Naive thymus-derived CD4-positive, alpha-beta T cell (primary cell): ENCODE measurements at regions of chr9 and their contacts with region 1.

Region 1: DNA sequence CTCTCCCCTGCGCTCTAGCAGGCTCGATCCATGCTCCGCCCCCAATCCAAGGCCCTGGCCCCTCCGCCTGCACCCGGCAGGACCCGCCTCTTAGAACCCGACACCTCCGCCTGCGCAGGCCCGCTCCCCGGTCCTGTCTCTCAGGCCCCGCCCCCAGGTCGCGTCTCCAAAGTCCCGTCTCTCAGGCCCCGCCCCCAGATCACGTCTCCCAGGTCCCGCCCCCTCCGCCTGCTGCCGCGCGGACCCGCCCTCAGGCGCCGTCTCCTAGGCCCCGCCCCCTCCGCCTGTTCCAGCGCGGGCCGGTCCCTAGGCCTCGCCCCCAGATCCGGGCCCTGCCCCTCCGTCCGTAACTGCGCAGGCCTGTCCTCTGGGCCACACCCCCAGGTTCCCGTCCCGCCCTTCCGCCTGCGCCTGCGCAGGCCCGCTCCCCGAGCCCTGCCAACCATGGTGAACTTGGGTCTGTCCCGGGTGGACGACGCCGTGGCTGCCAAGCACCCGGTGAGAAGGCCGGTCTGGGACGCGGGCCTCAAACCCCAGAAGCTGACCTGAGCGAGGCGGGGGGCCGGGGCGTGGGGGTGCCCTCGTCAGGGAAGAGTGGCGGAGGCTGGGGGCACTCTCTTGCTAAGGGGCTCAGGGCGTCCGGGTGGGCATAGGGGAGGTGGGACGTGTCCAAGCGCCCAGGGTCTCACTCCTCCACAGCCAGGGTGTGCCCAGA is at the start of gene TMEM141:
- DNase-seq: peak; percentile 99 to 100 (median 99)
- ATAC-seq: peak; percentile 92
- H3K4me3 ChIP-seq: peak within 1 kb of the TSS; percentile 94
- H3K4me3 Mint-ChIP-seq: peak within 1 kb of the TSS; percentile 76 to 90 (median 86)
- H3K27ac ChIP-seq: peak within 1 kb of the TSS; percentile 91
- H3K27ac Mint-ChIP-seq: peak within 1 kb of the TSS; percentile 57 to 98 (median 92)
- H3K4me1 ChIP-seq: peaks cover 18 to 22% of the 10 kb centered on the region in 2 donors
- H3K4me1 Mint-ChIP-seq: peaks cover 10 to 40% (median 31%) of the 10 kb centered on the region in 7 donors
- H3K27me3 ChIP-seq: no peaks in the 10 kb centered on the region
- H3K27me3 Mint-ChIP-seq: peaks cover 0 to 16% (median 0%) of the 10 kb centered on the region in 5 donors
- total RNA-seq, gene TMEM141: 27.2 to 54.9 (median 36.2) TPM

Region 2: GRCh38 chr9:136363606-136364370 is 427.3 kb before region 1 on chr9 and contains the start of gene DNLZ:
- CTCF ChIA-PET with region 1: no interaction called
- POLR2A ChIA-PET with region 1: no interaction called
- intact Hi-C with region 1: loop called (anchors 1 to 2 kb)
- DNase-seq: peak; percentile 71 to 93 (median 90)
- ATAC-seq: peak; percentile 88
- H3K4me3 ChIP-seq: peak within 1 kb of the TSS; percentile 70
- H3K4me3 Mint-ChIP-seq: peak within 1 kb of the TSS; percentile 65 to 88 (median 84)
- H3K27ac ChIP-seq: peak within 1 kb of the TSS; percentile 75
- H3K27ac Mint-ChIP-seq: peak within 1 kb of the TSS; percentile 62 to 91 (median 75)
- H3K4me1 ChIP-seq: peaks cover 0 to 5% of the 10 kb centered on the region in 2 donors
- H3K4me1 Mint-ChIP-seq: peaks cover 0 to 6% (median 0%) of the 10 kb centered on the region in 7 donors
- H3K27me3 ChIP-seq: no peaks in the 10 kb centered on the region
- H3K27me3 Mint-ChIP-seq: no peaks in the 10 kb centered on the region
- total RNA-seq, gene DNLZ: 17.2 to 27.5 (median 24.8) TPM

Region 3: GRCh38 chr9:136711751-136712689 is 79.1 kb before region 1 on chr9 and contains the start of gene DIPK1B:
- CTCF ChIA-PET with region 1: no interaction called
- POLR2A ChIA-PET with region 1: no interaction called
- intact Hi-C with region 1: no loop called
- DNase-seq: peak in 1 of 9 donors; percentile 16
- ATAC-seq: peak; percentile 52
- H3K4me3 ChIP-seq: peak within 1 kb of the TSS; percentile 24
- H3K4me3 Mint-ChIP-seq: peak within 1 kb of the TSS in 9 of 10 donors; percentile 33 to 84 (median 69)
- H3K27ac ChIP-seq: no peak within 1 kb of the TSS
- H3K27ac Mint-ChIP-seq: no peak within 1 kb of the TSS
- H3K4me1 ChIP-seq: no peaks in the 10 kb centered on the region
- H3K4me1 Mint-ChIP-seq: peaks cover 0 to 6% (median 4%) of the 10 kb centered on the region in 7 donors
- H3K27me3 ChIP-seq: peaks cover 0 to 9% of the 10 kb centered on the region in 2 donors
- H3K27me3 Mint-ChIP-seq: peaks cover 22 to 47% (median 35%) of the 10 kb centered on the region in 5 donors
- total RNA-seq, gene DIPK1B: 0.46 to 1.6 (median 0.56) TPM in 3 of 5 experiments, not detected in the others

Region 4: GRCh38 chr9:136849038-136849959 is 58.2 kb after region 1 on chr9 and contains the start of gene PHPT1:
- CTCF ChIA-PET with region 1: no interaction called
- POLR2A ChIA-PET with region 1: no interaction called
- intact Hi-C with region 1: loop called (anchors 1 to 2 kb)
- DNase-seq: peak; percentile 91 to 98 (median 97)
- ATAC-seq: peak; percentile 96
- H3K4me3 ChIP-seq: peak within 1 kb of the TSS; percentile 99
- H3K4me3 Mint-ChIP-seq: peak within 1 kb of the TSS; percentile 86 to 97 (median 92)
- H3K27ac ChIP-seq: peak within 1 kb of the TSS; percentile 71
- H3K27ac Mint-ChIP-seq: peak within 1 kb of the TSS; percentile 40 to 94 (median 88)
- H3K4me1 ChIP-seq: peaks cover 15 to 17% of the 10 kb centered on the region in 2 donors
- H3K4me1 Mint-ChIP-seq: peaks cover 0 to 16% (median 10%) of the 10 kb centered on the region in 7 donors
- H3K27me3 ChIP-seq: no peaks in the 10 kb centered on the region
- H3K27me3 Mint-ChIP-seq: peaks cover 0 to 21% (median 0%) of the 10 kb centered on the region in 5 donors
- total RNA-seq, gene PHPT1: 17.7 to 167 (median 27.7) TPM

Region 5: GRCh38 chr9:136978073-136978864 is 187.2 kb after region 1 on chr9:
- CTCF ChIA-PET with region 1: no interaction called
- POLR2A ChIA-PET with region 1: no interaction called
- intact Hi-C with region 1: loop called in 1 of 2 experiments (anchors 1 kb)
- DNase-seq: peak; percentile 40 to 82 (median 51)
- ATAC-seq: peak; percentile 87
- H3K4me3 ChIP-seq: no peak overlapping the region
- H3K4me3 Mint-ChIP-seq: peak overlapping the region in 3 of 10 donors; percentile 12 to 37 (median 23)
- H3K27ac ChIP-seq: no peak overlapping the region
- H3K27ac Mint-ChIP-seq: no peak overlapping the region
- H3K4me1 ChIP-seq: peaks cover 13 to 23% of the 10 kb centered on the region in 2 donors
- H3K4me1 Mint-ChIP-seq: peaks cover 0 to 19% (median 7%) of the 10 kb centered on the region in 7 donors
- H3K27me3 ChIP-seq: peaks cover 0 to under 1% of the 10 kb centered on the region in 2 donors
- H3K27me3 Mint-ChIP-seq: peaks cover 0 to 9% (median 3%) of the 10 kb centered on the region in 5 donors

Region 6: GRCh38 chr9:137070201-137070905 is 279.3 kb after region 1 on chr9 and contains the start of gene SAPCD2:
- CTCF ChIA-PET with region 1: interaction called, 5 read pairs
- POLR2A ChIA-PET with region 1: no interaction called
- intact Hi-C with region 1: loop called in 1 of 2 experiments (anchors 10 kb)
- DNase-seq: peak; percentile 72 to 88 (median 85)
- ATAC-seq: peak; percentile 94
- H3K4me3 ChIP-seq: peak within 1 kb of the TSS; percentile 27
- H3K4me3 Mint-ChIP-seq: peak within 1 kb of the TSS; percentile 66 to 92 (median 81)
- H3K27ac ChIP-seq: peak within 1 kb of the TSS; percentile 51
- H3K27ac Mint-ChIP-seq: peak within 1 kb of the TSS in 6 of 9 donors; percentile 40 to 86 (median 62)
- H3K4me1 ChIP-seq: peaks cover 11 to 15% of the 10 kb centered on the region in 2 donors
- H3K4me1 Mint-ChIP-seq: peaks cover 10 to 38% (median 12%) of the 10 kb centered on the region in 7 donors
- H3K27me3 ChIP-seq: no peaks in the 10 kb centered on the region
- H3K27me3 Mint-ChIP-seq: no peaks in the 10 kb centered on the region
- total RNA-seq, gene SAPCD2: 0.16 to 22.1 (median 0.74) TPM

Region 7: DNA sequence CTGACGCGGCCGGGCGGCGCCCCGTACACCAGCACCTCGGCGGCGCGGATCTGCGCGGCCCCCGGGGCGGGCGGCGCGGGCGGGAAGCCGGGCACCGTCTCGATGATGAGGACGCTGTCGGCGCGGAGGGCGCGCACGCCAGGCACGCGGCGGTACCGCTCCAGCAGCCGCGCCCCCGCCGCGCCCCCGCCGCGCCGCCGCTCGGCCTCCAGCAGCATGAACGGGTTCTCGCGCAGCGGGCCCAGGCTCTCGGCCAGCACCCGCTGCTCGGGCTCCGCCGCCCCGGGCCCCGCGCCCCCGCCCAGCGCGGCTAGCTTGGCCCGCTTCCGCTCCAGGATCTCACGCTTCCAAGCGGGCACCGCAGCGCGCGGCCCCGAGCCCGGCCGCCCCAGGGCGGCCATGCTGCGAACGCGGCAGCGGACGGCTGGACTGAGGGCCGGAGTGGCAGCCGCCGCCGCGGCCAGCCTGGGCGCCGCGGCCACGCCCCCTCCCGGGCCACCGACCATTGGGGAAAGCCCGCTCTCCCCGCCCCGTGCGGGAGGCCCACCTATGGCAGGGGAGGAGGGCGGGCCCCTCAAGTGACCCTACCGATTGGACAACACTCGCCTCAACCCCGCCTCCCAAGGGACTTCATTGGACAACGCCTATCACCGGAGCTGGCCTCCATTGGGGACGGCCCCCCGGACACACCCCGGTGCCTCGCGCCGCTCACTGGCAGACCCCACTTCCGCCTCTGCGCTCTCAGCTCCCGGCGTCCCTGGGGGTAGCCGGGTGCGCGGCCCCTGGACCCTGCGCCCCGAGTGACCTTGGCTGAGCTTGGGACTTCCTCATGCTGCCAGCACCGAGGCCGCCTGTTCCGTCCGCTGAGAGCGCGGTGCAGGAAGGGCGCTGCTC is 409.5 kb after region 1 on chr9 and contains the start of gene TPRN:
- CTCF ChIA-PET with region 1: no interaction called
- POLR2A ChIA-PET with region 1: no interaction called
- intact Hi-C with region 1: loop called in 1 of 2 experiments (anchors 2 kb)
- DNase-seq: peak; percentile 89 to 98 (median 97)
- ATAC-seq: peak; percentile 98
- H3K4me3 ChIP-seq: peak within 1 kb of the TSS; percentile 75
- H3K4me3 Mint-ChIP-seq: peak within 1 kb of the TSS; percentile 77 to 89 (median 84)
- H3K27ac ChIP-seq: peak within 1 kb of the TSS; percentile 78
- H3K27ac Mint-ChIP-seq: peak within 1 kb of the TSS; percentile 12 to 91 (median 78)
- H3K4me1 ChIP-seq: peaks cover 20 to 23% of the 10 kb centered on the region in 2 donors
- H3K4me1 Mint-ChIP-seq: peaks cover 16 to 34% (median 23%) of the 10 kb centered on the region in 7 donors
- H3K27me3 ChIP-seq: no peaks in the 10 kb centered on the region
- H3K27me3 Mint-ChIP-seq: no peaks in the 10 kb centered on the region
- total RNA-seq, gene TPRN: 7.1 to 13.5 (median 8.5) TPM

Region 8: GRCh38 chr9:137605121-137606004 is 814.3 kb after region 1 on chr9 and contains the start of gene ARRDC1:
- CTCF ChIA-PET with region 1: no interaction called
- POLR2A ChIA-PET with region 1: no interaction called
- intact Hi-C with region 1: loop called (anchors 2 kb)
- DNase-seq: peak; percentile 77 to 95 (median 88)
- ATAC-seq: peak; percentile 91
- H3K4me3 ChIP-seq: peak within 1 kb of the TSS; percentile 69
- H3K4me3 Mint-ChIP-seq: peak within 1 kb of the TSS; percentile 66 to 92 (median 84)
- H3K27ac ChIP-seq: peak within 1 kb of the TSS; percentile 85
- H3K27ac Mint-ChIP-seq: peak within 1 kb of the TSS in 5 of 9 donors; percentile 39 to 82 (median 52)
- H3K4me1 ChIP-seq: peaks cover 6 to 10% of the 10 kb centered on the region in 2 donors
- H3K4me1 Mint-ChIP-seq: peaks cover 0 to 39% (median 24%) of the 10 kb centered on the region in 7 donors
- H3K27me3 ChIP-seq: no peaks in the 10 kb centered on the region
- H3K27me3 Mint-ChIP-seq: no peaks in the 10 kb centered on the region
- total RNA-seq, gene ARRDC1: 53.7 to 126 (median 82.6) TPM